ENCODE measurements at regions of chr9 and their contacts with region 1.

Region 1: DNA sequence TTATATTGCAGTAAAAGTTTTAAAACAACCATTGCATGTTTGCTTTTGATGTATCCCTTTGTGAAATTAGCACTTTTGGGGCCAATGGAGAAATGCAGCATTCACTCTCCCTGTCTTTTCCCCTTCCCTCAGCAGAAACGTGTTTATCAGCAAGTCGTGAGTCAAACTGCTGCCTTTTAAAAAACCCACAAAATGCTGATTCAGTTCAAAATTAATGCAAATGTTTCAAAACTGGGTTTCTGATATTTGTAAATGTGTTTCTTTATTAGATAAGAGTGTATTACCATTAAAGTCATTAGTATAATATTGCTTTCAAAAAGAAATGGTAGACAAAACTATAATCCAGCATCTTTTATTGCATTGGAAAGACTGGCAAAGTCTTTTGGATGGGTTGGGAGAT is 47.3 kb downstream of the RAD23B start:
- DNase-seq: no peak
- H3K4me3 ChIP-seq: no peak overlapping the region
- H3K27ac ChIP-seq: no peak overlapping the region
- H3K4me1 ChIP-seq: no peaks in the 10 kb centered on the region
- H3K27me3 ChIP-seq: no peaks in the 10 kb centered on the region
- CTCF ChIP-seq: no peak
- EP300 ChIP-seq: no peak
- POLR2A ChIP-seq: no peak

Region 2: DNA sequence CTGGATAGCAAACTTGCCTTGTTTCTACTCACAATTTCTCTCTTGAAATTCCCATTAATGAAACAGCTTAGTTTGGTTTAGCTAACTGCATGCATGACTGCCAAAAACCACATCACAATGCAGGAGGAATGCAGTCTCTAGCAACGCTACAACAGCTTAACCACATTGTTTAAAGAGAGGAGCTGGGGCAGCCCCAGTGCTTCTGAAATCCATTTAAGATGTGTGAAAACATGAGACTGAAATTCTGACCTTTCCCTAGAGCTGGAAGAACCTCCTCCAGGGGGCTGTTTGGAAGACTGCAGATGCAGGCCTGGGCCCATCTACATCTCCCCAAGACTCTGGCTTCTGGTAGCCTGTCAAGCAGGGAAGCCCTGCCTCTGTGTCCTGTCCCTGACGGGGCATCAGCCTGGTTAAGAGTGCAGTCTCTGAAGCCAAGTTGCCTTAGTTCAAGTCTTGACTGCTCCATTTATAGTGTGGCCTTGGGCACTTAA is 310.3 kb before region 1 on chr9:
- in situ Hi-C with region 1: no loop called
- intact Hi-C with region 1: no loop called
- DNase-seq: no peak
- H3K4me3 ChIP-seq: no peak overlapping the region
- H3K27ac ChIP-seq: peak overlapping the region in 1 of 4 donors; percentile 36
- H3K4me1 ChIP-seq: peaks cover 0 to 10% (median 1%) of the 10 kb centered on the region in 4 donors
- H3K27me3 ChIP-seq: no peaks in the 10 kb centered on the region
- CTCF ChIP-seq: no peak
- EP300 ChIP-seq: no peak
- POLR2A ChIP-seq: no peak

Region 3: GRCh38 chr9:107251756-107252322 is 78.6 kb before region 1 on chr9:
- in situ Hi-C with region 1: no loop called
- intact Hi-C with region 1: no loop called
- DNase-seq: no peak
- H3K4me3 ChIP-seq: no peak overlapping the region
- H3K27ac ChIP-seq: peak overlapping the region in 1 of 4 donors; percentile 3
- H3K4me1 ChIP-seq: no peaks in the 10 kb centered on the region
- H3K27me3 ChIP-seq: no peaks in the 10 kb centered on the region
- CTCF ChIP-seq: no peak
- EP300 ChIP-seq: no peak
- POLR2A ChIP-seq: no peak

Region 4: DNA sequence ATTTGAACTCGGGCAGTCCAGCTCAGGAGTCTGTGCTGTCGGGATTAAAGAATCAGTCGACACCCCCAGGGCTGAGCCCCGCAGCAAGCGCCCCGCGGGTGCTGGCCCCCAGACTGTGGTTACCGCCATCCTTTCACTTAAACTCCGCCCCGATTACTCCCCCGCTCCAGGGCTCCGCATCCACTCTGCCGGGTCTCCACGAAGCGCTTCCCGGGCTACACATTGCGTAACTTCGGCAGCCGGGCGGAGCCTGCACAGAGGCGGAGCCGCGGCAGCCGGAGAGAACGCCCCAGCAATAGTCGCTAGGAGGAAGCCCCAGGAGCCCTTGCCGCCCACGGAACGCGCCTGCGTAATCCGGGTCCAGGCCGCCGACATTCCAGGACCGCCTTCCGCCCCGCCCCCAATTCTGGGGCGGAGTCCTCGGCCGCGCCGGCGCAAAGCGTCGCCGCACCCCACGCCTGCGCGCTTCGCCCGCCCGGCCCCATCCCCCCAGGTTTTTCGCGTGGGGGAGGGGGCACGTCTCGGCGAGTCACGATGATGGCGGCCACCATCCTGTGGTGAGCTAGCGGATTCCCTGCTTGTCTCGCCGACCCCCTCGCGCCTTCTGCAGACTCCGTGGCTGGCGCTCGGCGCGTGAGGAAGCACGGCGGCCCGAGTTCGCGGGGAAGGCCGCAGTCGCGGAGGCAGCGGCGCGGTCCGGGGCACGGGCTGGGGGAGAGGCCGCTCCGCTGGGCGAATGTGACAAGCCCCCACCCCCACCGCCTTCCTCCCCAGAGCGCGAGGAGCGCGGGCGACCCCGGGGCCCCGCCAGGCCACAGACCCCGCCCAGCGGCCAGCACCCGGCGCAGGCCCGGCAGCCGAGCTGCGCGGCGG is 47.4 kb before region 1 on chr9 and contains the start of gene RAD23B:
- in situ Hi-C with region 1: no loop called
- intact Hi-C with region 1: loop called (anchors 1 kb)
- DNase-seq: peak; percentile 99
- H3K4me3 ChIP-seq: peak within 1 kb of the TSS; percentile 94 to 100 (median 97)
- H3K27ac ChIP-seq: peak within 1 kb of the TSS; percentile 98 to 100 (median 98)
- H3K4me1 ChIP-seq: peaks cover 3 to 41% (median 33%) of the 10 kb centered on the region in 4 donors
- H3K27me3 ChIP-seq: no peaks in the 10 kb centered on the region
- CTCF ChIP-seq: no peak
- EP300 ChIP-seq: no peak
- POLR2A ChIP-seq: peak; percentile 82
- total RNA-seq, gene RAD23B: 41.8 to 75.2 (median 54.9) TPM

Measured in transverse colon (tissue), 4 donors.